ENCODE measurements at regions of chr20 and their contacts with region 1.

Region 1: GRCh38 chr20:39264506-39265172 is 302.5 kb downstream of the DHX35 start:
- DNase-seq: peak; percentile 44 to 50
- H3K4me3 ChIP-seq: no peak overlapping the region
- H3K27ac ChIP-seq: no peak overlapping the region
- H3K4me1 ChIP-seq: peaks cover 0 to 2% of the 10 kb centered on the region in 2 donors
- H3K27me3 ChIP-seq: no peaks in the 10 kb centered on the region
- CTCF ChIP-seq: peak; percentile 20 to 78 (median 46)
- POLR2A ChIP-seq: no peak

Region 2: DNA sequence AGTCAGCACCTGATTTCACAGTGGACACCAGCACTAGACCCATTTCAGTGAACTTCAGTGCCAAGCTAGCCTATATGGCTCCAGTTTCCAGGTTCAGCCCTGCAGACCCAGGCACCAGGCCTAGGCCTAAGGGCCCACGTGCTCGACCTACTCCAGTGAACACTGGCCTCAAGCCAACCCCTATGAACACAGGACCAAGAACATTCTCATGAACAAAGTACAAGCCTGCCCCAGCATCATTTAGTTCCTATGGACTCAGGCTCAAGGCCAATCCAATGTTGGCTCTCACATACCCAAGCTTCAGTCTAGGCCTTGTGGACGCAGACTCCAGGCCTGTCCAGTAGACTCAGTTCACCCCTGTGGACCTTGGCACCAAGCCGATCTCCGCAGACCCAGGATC is 83.0 kb after region 1 on chr20:
- intact Hi-C with region 1: no loop called
- DNase-seq: no peak
- H3K4me3 ChIP-seq: no peak overlapping the region
- H3K27ac ChIP-seq: no peak overlapping the region
- H3K4me1 ChIP-seq: no peaks in the 10 kb centered on the region
- H3K27me3 ChIP-seq: no peaks in the 10 kb centered on the region
- CTCF ChIP-seq: no peak
- POLR2A ChIP-seq: no peak

Region 3: GRCh38 chr20:40956542-40957264 is 1692.1 kb after region 1 on chr20:
- intact Hi-C with region 1: loop called (anchors 10 kb)
- DNase-seq: no peak
- H3K4me3 ChIP-seq: no peak overlapping the region
- H3K27ac ChIP-seq: no peak overlapping the region
- H3K4me1 ChIP-seq: no peaks in the 10 kb centered on the region
- H3K27me3 ChIP-seq: no peaks in the 10 kb centered on the region
- CTCF ChIP-seq: no peak
- POLR2A ChIP-seq: no peak